ENCODE measurements at regions of chr7 and their contacts with region 1.

Region 1: DNA sequence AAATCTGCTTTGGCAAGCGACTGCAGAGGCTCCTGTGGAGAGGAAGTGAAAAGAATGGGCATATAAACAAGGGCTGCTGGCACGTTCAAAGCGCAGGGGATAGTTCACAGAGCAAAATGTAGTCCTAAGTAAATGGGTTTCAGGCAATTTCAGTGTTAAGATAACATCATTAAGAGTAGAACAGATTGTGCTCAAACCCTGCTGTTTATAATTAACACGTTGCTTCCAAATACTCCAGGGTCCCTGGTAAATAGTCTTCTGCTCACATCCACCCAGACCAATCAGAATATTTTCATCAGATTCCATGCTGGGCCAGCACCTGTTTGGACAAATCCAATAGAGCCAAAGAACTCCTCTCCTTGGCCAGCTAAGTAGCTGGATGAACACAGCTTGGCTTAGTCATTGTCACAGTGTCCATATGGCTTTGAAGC is 81.4 kb downstream of the ORC5 start:
- DNase-seq: no peak
- ATAC-seq: no peak
- H3K4me3 ChIP-seq: no peak overlapping the region
- H3K27ac ChIP-seq: no peak overlapping the region
- H3K4me1 ChIP-seq: no peaks in the 10 kb centered on the region
- H3K27me3 ChIP-seq: no peaks in the 10 kb centered on the region
- CTCF ChIP-seq: no peak

Region 2: DNA sequence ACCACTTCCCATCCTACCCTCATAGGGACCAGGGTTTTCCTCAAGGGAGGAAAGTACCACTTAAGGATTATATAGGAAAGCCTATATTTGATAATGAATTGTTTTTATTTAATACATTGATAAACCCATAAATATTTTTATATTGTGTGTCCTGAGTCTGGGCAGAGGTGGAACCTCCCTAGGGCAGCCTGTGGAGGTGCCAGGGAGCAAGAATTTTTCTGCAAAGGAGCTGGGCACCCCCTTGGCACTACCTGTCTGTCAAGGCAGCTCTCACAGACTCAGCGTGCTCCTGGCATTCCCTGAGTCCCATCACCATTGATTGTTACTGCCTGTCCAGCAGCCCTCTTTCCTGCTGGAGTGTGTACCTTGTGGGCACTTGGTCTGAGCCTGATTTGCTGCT is 24.6 kb before region 1 on chr7:
- intact Hi-C with region 1: loop called in 1 of 10 experiments (anchors 2 kb)
- DNase-seq: no peak
- ATAC-seq: no peak
- H3K4me3 ChIP-seq: no peak overlapping the region
- H3K27ac ChIP-seq: no peak overlapping the region
- H3K4me1 ChIP-seq: no peaks in the 10 kb centered on the region
- H3K27me3 ChIP-seq: no peaks in the 10 kb centered on the region
- CTCF ChIP-seq: no peak